AG04450 (cell line): ENCODE measurements at regions of chrX and their contacts with region 1.

Region 1: GRCh38 chrX:152926279-152926678 is 28.4 kb downstream of the ZNF185 start:
- DNase-seq: no peak
- H3K4me3 ChIP-seq: no peak overlapping the region
- H3K27ac ChIP-seq: no peak overlapping the region
- H3K27me3 ChIP-seq: no peaks in the 10 kb centered on the region
- CTCF ChIP-seq: peak; percentile 55

Region 2: GRCh38 chrX:152641996-152642395 is 284.3 kb before region 1 on chrX:
- CTCF ChIA-PET with region 1: interaction called, 14 read pairs
- POLR2A ChIA-PET with region 1: no interaction called
- DNase-seq: no peak
- H3K4me3 ChIP-seq: no peak overlapping the region
- H3K27ac ChIP-seq: no peak overlapping the region
- H3K27me3 ChIP-seq: peaks cover 7% of the 10 kb centered on the region
- CTCF ChIP-seq: 0 out of 2 replicates have a peak, but pooled peaks have one; percentile 7

Region 3: GRCh38 chrX:152904151-152905080 is 21.9 kb before region 1 on chrX:
- CTCF ChIA-PET with region 1: interaction called, 16 read pairs
- POLR2A ChIA-PET with region 1: no interaction called
- DNase-seq: no peak
- H3K4me3 ChIP-seq: no peak overlapping the region
- H3K27ac ChIP-seq: peak overlapping the region; percentile 47
- H3K27me3 ChIP-seq: no peaks in the 10 kb centered on the region
- CTCF ChIP-seq: peak; percentile 73

Region 4: DNA sequence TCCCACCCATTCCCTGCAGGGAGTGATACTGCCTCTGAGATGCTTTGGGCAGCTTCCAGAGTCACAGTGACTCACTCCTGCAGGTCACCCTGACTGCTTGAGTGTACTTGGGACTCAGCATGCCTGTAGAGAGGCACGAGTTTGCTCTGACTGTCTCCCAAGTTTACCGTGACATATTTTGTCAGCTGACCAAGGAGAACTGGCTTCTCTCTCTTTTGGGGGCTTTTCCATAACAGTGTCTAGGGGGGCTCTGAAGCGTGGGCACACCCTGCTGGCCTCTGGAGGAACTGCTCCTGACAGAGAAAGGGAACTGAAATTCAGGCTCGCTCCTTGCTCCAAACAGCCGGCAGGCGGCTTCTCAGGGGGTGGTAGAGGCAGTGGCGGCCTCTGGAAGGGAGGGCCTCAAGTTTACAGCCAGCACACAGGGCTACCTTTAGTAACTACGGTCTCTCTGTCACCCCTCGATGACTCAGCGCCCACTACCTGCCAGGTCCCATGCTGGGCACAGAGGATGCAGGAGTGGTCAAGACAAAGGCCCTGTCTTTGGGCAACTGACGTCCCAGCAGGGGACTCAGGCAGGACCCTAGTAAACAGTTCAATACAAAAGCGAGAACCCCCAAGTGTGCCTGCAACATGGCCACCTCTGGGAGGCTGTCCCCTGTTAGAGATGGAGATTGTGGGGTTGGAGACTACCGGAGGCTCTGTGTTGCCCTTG is 10.6 kb before region 1 on chrX:
- CTCF ChIA-PET with region 1: interaction called, 10 read pairs
- POLR2A ChIA-PET with region 1: no interaction called
- DNase-seq: no peak
- H3K4me3 ChIP-seq: no peak overlapping the region
- H3K27ac ChIP-seq: peak overlapping the region; percentile 11
- H3K27me3 ChIP-seq: no peaks in the 10 kb centered on the region
- CTCF ChIP-seq: peak; percentile 69

Region 5: GRCh38 chrX:153342762-153343558 is 416.7 kb after region 1 on chrX:
- CTCF ChIA-PET with region 1: no interaction called
- POLR2A ChIA-PET with region 1: no interaction called
- DNase-seq: no peak
- H3K4me3 ChIP-seq: no peak overlapping the region
- H3K27ac ChIP-seq: no peak overlapping the region
- H3K27me3 ChIP-seq: no peaks in the 10 kb centered on the region
- CTCF ChIP-seq: no peak